Posterior vena cava (tissue), 2 donors: ENCODE measurements at regions of chr17 and their contacts with region 1.

Region 1: GRCh38 chr17:13044572-13045065 is 26.8 kb upstream of the ELAC2 start:
- DNase-seq: no peak

Region 2: DNA sequence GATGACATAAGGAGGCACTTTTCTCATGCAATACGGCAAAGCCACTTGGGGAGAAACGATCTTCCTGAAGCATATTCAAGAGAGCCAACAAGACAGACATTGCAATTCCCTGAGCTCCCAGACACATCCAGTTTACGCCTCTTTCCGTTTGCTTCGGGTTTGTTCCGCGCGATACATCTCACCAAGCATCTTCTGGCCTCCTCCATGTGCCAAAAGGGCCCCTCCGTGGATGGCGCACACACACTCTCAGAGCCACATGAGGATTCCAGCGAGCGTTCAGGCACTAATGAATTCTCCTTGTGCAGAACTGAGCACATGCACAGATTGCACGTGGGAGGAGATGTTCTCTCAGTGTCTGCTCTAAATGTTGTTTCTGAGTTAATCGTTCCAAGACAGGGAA is 1950.3 kb before region 1 on chr17:
- intact Hi-C with region 1: loop called in 1 of 2 experiments (anchors 5 kb)
- DNase-seq: no peak

Region 3: DNA sequence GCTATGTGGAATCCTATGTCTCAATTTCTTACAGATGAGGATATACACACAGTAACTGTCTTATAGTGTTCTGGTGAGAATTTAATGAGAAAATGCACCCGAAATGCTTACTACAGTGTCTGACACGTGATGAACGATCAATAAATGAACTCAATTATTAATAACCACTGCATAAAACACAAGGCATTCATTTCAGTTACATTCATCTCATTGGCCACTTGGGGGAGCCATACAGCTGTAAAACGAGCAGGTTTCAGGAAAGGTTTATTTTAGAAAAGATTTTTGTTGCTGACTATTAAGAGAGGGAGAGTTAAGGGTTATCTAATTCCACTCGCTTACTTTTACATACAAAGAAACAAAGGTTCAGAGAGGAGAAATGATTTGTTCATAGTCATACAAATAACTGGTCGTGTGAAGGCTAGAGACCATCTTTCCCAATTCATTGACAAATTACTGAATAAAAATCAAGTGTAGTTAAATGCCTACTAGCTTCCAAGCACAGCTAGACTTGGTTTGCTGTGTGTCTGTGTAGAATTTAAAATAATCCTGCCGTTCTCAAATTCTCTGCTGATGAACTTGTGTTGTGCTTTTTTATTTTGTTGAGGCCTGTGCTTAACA is 863.9 kb before region 1 on chr17:
- intact Hi-C with region 1: no loop called
- DNase-seq: no peak